Sigmoid colon (tissue), 7 donors: ENCODE measurements at regions of chr1 and their contacts with region 1.

Region 1: GRCh38 chr1:225777583-225778336 is at the start of gene SRP9:
- DNase-seq: peak; percentile 99
- H3K4me3 ChIP-seq: peak within 1 kb of the TSS; percentile 63 to 84 (median 74)
- H3K27ac ChIP-seq: peak within 1 kb of the TSS; percentile 92 to 96 (median 94)
- H3K4me1 ChIP-seq: peaks cover 0 to 82% (median 79%) of the 10 kb centered on the region in 4 donors
- H3K27me3 ChIP-seq: no peaks in the 10 kb centered on the region
- CTCF ChIP-seq: peak; percentile 77 to 93 (median 83)
- EP300 ChIP-seq: no peak
- POLR2A ChIP-seq: peak; percentile 88 to 93
- total RNA-seq, gene SRP9: 148 to 270 (median 220) TPM

Region 2: DNA sequence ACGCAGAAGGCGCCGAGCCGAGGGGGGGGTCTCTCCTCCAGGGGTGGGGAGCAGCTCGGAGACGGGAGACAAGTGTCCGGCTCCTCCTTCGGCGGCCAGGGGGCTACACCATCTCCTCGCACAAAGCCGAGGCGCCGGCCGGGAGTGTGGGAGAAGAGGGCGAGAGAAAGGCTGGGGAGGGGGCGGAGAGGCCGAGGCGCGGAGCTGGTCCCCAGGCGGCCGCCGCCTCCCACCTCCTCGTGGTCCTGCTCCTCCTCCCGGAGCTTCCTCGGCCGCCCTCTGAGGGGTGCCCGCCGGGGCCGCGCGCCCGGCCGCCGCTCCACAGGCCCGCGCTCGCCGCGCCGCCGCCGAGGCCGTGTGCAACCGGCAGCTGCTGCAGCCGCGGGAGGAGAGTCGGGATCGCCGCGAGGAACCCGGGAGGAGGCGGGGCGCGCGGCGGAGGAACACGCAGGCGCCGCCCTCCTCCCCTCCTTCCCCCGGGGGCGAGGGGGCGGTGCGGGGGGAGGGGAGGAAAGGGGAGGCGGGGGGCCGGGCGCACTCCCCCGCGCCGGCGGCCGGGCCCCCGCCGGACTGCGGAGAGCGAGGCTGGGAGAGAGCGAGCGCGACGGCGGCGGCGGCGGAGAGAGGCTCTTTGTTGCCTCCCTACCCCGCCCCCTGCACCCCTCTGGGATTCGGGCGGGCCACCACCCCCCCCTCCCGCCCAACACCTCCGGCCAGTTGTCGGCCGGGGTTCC is 124.9 kb before region 1 on chr1 and contains the start of gene ENAH:
- intact Hi-C with region 1: loop called (anchors 2 kb)
- DNase-seq: peak; percentile 93
- H3K4me3 ChIP-seq: peak within 1 kb of the TSS; percentile 97 to 100 (median 98)
- H3K27ac ChIP-seq: peak within 1 kb of the TSS; percentile 97 to 100 (median 99)
- H3K4me1 ChIP-seq: peaks cover 0 to 53% (median 42%) of the 10 kb centered on the region in 4 donors
- H3K27me3 ChIP-seq: no peaks in the 10 kb centered on the region
- CTCF ChIP-seq: no peak
- EP300 ChIP-seq: no peak
- POLR2A ChIP-seq: no peak
- total RNA-seq, gene ENAH: 92.2 to 197 (median 116) TPM

Region 3: GRCh38 chr1:225809842-225810578 is 32.2 kb after region 1 on chr1 and contains the start of gene EPHX1:
- intact Hi-C with region 1: loop called (anchors 2 kb)
- DNase-seq: peak; percentile 95
- H3K4me3 ChIP-seq: peak within 1 kb of the TSS; percentile 69 to 73 (median 71)
- H3K27ac ChIP-seq: peak within 1 kb of the TSS; percentile 88 to 95 (median 88)
- H3K4me1 ChIP-seq: peaks cover 0 to 46% (median 45%) of the 10 kb centered on the region in 4 donors
- H3K27me3 ChIP-seq: no peaks in the 10 kb centered on the region
- CTCF ChIP-seq: peak in 2 of 4 experiments; percentile 42 to 45
- EP300 ChIP-seq: no peak
- POLR2A ChIP-seq: peak; percentile 51 to 55
- total RNA-seq, gene EPHX1: 43.6 to 78.9 (median 67.7) TPM

Region 4: DNA sequence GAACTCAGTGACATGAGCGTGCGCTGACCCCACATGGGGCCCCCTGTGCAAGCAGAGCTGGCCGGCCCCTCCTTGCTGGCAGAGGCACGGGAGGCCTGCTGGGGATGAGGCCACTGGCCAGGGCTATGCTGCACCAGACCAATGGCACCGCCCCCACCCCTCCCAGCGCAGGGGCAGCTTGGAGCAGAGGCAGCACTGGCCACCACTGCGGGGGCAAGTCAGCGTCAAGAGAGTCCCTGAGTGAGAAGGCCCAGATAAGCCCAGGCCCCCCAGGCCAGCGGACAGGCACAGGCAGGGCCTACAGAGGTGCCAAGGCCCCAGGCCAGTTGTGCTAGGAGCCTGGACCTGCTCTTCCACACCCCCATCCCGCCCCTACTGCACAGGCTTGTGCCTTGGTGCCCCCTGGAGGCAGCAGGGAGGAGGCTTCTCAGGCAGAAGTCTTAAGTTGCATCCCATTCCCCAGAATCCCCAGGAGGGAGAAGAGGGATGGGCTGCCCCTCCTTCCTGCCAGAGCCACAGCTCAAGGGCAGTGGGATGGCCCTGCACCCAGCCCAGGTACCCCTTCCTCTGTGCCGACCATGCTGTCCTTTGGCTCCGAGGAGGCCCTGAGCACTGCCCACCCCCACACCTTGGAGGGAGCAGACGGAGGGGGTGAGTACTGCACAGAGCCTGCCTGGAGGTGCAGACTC is 68.0 kb after region 1 on chr1:
- intact Hi-C with region 1: loop called (anchors 2 kb)
- DNase-seq: peak; percentile 93
- H3K4me3 ChIP-seq: no peak overlapping the region
- H3K27ac ChIP-seq: peak overlapping the region; percentile 14 to 68 (median 65)
- H3K4me1 ChIP-seq: peaks cover 0 to 15% (median 13%) of the 10 kb centered on the region in 4 donors
- H3K27me3 ChIP-seq: no peaks in the 10 kb centered on the region
- CTCF ChIP-seq: peak; percentile 77 to 81 (median 80)
- EP300 ChIP-seq: no peak
- POLR2A ChIP-seq: no peak

Region 5: DNA sequence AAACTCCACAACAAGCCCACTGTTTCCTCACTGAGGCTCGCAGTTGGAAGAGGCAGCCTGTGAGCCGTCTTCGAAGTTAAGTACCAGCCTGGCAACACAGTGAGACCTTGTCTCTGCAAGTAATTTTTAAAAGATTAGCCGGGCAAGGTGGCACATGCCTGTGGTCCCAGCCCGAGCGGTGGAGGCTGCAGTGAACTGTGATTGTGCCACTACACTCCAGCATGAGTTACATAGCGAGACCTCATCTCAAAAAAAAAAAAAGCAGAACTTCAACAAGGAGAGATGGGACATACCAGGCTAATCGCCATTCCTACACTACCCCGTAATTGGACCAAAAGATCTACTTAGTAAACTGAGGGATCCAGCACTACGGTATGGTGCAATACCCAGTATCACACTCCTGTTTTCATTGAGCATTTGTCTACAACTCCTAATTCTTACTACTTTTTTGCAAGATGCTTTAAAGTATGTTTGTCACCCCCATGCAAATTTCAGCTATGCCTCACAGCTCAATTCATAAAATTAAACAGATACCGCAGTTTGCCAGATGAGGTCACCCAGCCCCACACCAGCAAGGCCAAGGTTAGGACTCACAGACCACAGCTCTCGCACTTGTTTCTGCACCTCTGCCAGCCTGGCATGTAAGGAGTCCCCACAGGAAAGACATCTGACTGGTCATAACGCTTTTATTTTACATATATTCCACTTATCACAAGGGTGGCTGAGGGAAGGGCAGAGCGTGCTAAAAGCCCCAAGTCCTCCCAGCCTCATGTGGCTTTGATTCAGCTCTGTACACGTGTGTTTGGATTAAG is 200.4 kb after region 1 on chr1:
- intact Hi-C with region 1: loop called (anchors 5 kb)
- DNase-seq: peak; percentile 37
- H3K4me3 ChIP-seq: no peak overlapping the region
- H3K27ac ChIP-seq: no peak overlapping the region
- H3K4me1 ChIP-seq: peaks cover 0 to 7% (median 4%) of the 10 kb centered on the region in 4 donors
- H3K27me3 ChIP-seq: no peaks in the 10 kb centered on the region
- CTCF ChIP-seq: no peak
- EP300 ChIP-seq: no peak
- POLR2A ChIP-seq: no peak